ENCODE measurements at regions of chr2 and their contacts with region 1.

Region 1: DNA sequence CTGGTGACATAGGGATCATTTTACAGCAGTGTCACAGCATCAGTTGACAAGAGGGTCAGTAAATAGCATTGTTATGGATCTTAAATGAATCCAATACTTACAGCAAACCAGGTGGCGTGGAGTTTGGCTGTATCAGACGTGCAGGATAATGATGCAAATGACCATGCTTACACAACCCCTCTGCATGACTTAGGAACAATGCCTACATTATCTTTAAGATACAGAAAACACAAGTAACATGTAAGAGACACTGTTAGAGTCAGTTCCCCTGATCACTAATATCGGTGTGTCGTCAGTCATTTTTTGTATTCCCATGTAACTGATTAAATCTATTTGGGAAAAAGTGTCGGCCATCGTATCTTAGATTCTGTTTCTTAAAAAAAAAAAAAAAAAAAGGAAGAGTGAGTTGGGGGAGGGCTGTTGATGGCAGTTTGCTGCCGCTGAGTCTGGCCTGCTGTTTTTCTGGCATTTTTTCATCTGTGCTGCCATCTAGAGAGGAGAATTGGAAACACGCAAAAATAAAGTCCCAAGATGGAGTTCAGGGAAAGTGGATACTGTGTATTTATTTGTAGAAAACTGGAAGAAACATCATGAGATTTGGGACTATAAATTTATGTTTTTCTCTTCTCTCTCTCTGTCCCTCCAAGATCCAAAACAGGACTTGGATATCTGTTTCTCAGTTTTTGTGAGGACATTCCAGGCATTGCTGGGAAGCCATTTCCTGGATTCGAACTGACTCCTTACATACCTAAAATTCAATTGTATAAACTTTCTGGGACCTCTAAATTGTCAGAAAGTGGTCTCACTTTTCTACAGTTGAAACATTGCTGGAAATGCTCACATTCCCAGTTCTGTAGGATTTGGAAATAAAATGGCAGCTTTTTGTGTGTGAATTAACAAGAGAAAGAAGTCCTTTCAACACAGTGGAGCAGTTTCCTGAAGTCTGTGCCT is 60.3 kb upstream of the AGPS start:
- DNase-seq: peak; percentile 33
- H3K4me3 ChIP-seq: no peak overlapping the region
- H3K27ac ChIP-seq: peak overlapping the region; percentile 22 to 67 (median 60)
- H3K4me1 ChIP-seq: peaks cover 0 to 12% (median 0%) of the 10 kb centered on the region in 4 donors
- H3K27me3 ChIP-seq: no peaks in the 10 kb centered on the region
- CTCF ChIP-seq: peak; percentile 53 to 85 (median 63)
- EP300 ChIP-seq: no peak
- POLR2A ChIP-seq: no peak

Region 2: DNA sequence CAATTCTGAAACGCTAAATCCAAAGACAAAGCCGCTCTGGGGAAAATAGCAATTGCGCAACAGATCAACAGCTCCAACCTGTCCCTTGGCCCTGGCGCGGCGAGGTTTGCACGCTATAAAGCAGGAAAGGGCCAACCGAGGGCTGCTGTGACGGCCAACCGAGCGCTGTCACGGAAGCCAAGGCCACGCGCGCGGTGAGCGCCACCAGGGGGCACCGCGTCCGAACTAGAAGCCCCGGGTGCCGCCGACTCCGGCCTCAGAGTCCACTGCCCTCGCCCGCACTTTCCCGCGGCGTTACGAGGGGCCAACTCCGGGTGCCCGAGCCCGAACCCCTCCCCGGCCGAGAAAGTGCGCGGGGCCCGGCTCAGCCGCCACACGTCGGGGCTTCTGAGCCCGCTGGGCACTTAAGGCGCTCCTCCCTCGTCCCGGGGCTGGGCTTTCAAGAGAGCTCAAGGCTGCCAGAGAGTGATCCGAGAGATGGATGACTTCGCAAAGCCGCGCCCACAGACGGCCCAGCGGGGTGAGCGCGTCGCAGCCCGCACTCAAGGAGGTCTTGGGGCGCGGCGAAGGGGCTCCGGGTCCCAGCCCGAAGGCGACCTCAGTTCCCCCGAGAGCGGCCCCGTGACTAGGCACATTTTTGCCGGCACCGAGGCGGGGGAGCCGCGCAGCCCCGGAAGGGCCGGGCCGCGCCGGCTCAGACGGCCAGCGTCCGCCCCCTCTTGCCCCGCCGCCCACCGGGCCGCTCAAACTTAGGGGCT is 68.7 kb before region 1 on chr2:
- in situ Hi-C with region 1: no loop called
- intact Hi-C with region 1: loop called (anchors 10 kb)
- DNase-seq: peak; percentile 99
- H3K4me3 ChIP-seq: peak overlapping the region; percentile 73 to 96 (median 86)
- H3K27ac ChIP-seq: peak overlapping the region; percentile 98 to 100 (median 98)
- H3K4me1 ChIP-seq: peaks cover 15 to 61% (median 49%) of the 10 kb centered on the region in 4 donors
- H3K27me3 ChIP-seq: no peaks in the 10 kb centered on the region
- CTCF ChIP-seq: peak; percentile 79 to 97 (median 87)
- EP300 ChIP-seq: peak; percentile 83
- POLR2A ChIP-seq: peak; percentile 85

Region 3: GRCh38 chr2:177383935-177384334 is 51.6 kb after region 1 on chr2:
- in situ Hi-C with region 1: no loop called
- intact Hi-C with region 1: no loop called
- DNase-seq: no peak
- H3K4me3 ChIP-seq: no peak overlapping the region
- H3K27ac ChIP-seq: no peak overlapping the region
- H3K4me1 ChIP-seq: no peaks in the 10 kb centered on the region
- H3K27me3 ChIP-seq: no peaks in the 10 kb centered on the region
- CTCF ChIP-seq: no peak
- EP300 ChIP-seq: no peak
- POLR2A ChIP-seq: no peak

Region 4: DNA sequence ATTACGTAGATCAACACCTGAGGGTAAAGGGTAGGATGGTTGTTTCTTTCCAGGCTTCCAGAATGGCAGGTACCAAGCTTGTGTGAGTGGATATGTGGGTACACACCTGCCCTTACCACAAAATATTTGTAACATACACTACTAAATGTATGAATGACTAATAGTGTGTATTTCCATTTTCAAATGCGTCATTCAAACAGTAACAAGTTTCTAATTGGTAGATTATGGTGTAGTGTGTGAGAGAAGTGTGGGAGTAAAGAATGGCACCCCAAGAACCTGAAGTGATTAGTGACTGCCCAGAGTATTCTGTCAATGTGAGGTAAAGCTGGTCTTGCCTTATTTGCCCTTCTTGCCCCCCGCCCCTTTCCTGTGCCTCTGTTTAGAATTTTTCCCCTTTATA is 81.4 kb after region 1 on chr2:
- in situ Hi-C with region 1: loop called in 3 of 4 experiments (anchors 5 to 10 kb)
- intact Hi-C with region 1: loop called (anchors 10 kb)
- DNase-seq: no peak
- H3K4me3 ChIP-seq: no peak overlapping the region
- H3K27ac ChIP-seq: no peak overlapping the region
- H3K4me1 ChIP-seq: peaks cover 0 to 25% (median 3%) of the 10 kb centered on the region in 4 donors
- H3K27me3 ChIP-seq: no peaks in the 10 kb centered on the region
- CTCF ChIP-seq: no peak
- EP300 ChIP-seq: no peak
- POLR2A ChIP-seq: no peak

Region 5: GRCh38 chr2:177604271-177605065 is 272.2 kb after region 1 on chr2:
- in situ Hi-C with region 1: loop called in 3 of 4 experiments (anchors 10 to 25 kb)
- intact Hi-C with region 1: no loop called
- DNase-seq: no peak
- H3K4me3 ChIP-seq: no peak overlapping the region
- H3K27ac ChIP-seq: peak overlapping the region; percentile 19 to 59 (median 40)
- H3K4me1 ChIP-seq: peaks cover 0 to 28% (median 3%) of the 10 kb centered on the region in 4 donors
- H3K27me3 ChIP-seq: no peaks in the 10 kb centered on the region
- CTCF ChIP-seq: peak; percentile 61 to 68 (median 64)
- EP300 ChIP-seq: no peak
- POLR2A ChIP-seq: no peak

Region 6: DNA sequence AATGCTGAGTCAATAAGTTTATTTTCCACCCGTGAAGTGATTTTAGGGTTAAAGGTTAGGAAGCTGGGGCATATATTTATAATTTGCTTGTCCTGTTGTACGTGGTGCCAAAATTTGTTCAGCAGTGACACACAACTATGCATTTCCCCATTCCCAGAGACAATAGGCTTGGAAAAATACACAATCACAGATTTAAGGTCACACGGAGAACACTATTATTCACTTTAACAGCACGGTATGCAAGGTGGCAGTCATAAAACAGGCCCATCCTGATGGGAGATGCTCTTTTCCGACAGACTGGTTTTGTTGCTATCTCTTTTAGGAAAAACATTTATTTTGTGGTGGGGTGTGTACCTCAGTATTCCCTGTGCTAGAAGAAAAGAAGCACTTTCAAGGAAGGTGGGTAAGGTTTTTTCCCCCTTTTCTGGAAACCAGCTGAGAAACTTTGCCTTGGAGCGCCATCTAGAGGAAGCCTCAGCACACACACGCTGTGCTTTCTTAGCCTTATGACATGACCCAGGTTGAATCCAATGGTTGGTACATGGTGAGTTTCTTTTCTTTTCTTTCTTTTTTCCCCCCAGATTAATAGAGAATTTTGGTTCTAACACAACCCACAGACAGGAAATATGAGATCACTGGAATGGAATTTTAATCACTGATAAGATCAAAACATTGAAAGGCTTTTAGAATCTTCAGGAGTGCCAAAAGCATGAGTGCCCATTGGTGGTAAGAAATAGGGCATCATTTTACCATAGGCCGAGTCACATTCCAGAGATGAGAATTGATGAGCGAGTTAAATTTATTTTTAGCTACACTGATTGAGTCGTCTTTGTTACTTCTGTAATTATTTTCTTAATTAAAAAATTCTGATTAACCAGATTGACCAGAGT is 392.3 kb after region 1 on chr2:
- in situ Hi-C with region 1: loop called in 3 of 4 experiments (anchors 10 to 25 kb)
- intact Hi-C with region 1: no loop called
- DNase-seq: peak; percentile 55
- H3K4me3 ChIP-seq: no peak overlapping the region
- H3K27ac ChIP-seq: no peak overlapping the region
- H3K4me1 ChIP-seq: peaks cover 0 to 4% (median 0%) of the 10 kb centered on the region in 4 donors
- H3K27me3 ChIP-seq: no peaks in the 10 kb centered on the region
- CTCF ChIP-seq: peak; percentile 85 to 89 (median 85)
- EP300 ChIP-seq: no peak
- POLR2A ChIP-seq: no peak